ENCODE measurements at regions of chr17 and their contacts with region 1.

Region 1: GRCh38 chr17:42744806-42745617 is at the start of gene EZH1:
- DNase-seq: peak; percentile 96
- ATAC-seq: peak; percentile 91
- H3K4me3 Mint-ChIP-seq: peak within 1 kb of the TSS; percentile 89
- H3K27ac Mint-ChIP-seq: peak within 1 kb of the TSS; percentile 98
- H3K4me1 Mint-ChIP-seq: peaks cover 19% of the 10 kb centered on the region
- H3K27me3 Mint-ChIP-seq: peaks cover 7% of the 10 kb centered on the region
- total RNA-seq, gene EZH1: 28.6 to 29.5 TPM

Region 2: DNA sequence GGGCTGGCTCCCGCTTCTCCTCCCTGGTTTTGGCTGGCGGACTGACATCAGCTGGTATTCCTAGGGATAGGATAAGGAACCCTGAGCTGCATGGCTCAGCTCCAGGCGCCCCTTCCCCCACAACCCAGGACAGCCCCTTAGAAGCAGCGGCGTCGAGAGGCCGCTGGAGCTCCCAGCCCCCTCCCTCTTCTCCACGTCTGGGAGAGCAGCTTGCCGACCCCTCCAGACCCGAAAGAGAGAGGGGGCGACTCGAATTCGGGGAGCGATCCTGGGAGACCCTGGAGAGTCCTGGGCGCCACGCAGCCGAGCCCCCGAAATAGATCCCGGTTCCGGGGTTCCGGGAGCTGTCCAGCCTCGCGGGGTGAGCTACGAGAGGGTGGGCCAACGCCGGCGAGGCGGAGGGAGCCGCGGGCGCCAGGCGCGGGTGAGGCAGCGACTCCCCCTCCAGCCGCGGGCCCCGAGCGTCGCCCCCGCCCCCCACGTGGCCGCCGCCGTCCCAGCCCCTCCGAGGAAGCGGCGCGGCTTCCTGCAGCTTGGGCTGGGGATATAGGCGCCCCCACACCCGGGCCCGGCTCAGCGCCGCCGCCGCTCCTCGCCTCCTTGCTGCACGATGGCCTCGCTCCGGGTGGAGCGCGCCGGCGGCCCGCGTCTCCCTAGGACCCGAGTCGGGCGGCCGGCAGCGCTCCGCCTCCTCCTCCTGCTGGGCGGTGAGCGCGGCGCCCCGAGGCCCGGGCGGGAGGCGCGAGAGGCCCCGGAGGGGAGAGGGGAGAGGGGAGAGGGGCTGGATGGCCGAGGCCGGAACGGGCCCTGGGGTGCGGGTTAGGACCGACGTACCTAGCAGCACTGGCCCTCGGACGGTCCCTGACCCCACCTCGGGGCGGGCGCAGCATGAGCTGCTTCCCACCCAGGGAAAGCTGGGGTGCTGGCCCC is 15.9 kb after region 1 on chr17 and contains the start of gene RAMP2:
- CTCF ChIA-PET with region 1: interaction called, 12 read pairs
- POLR2A ChIA-PET with region 1: no interaction called
- intact Hi-C with region 1: loop called in 1 of 2 experiments (anchors 2 kb)
- DNase-seq: peak; percentile 44
- ATAC-seq: peak; percentile 27
- H3K4me3 Mint-ChIP-seq: no peak within 1 kb of the TSS
- H3K27ac Mint-ChIP-seq: no peak within 1 kb of the TSS
- H3K4me1 Mint-ChIP-seq: peaks cover 11% of the 10 kb centered on the region
- H3K27me3 Mint-ChIP-seq: peaks cover 48% of the 10 kb centered on the region
- total RNA-seq, gene RAMP2: not detected

Region 3: GRCh38 chr17:42773290-42774035 is 28.5 kb after region 1 on chr17 and contains the start of gene VPS25:
- CTCF ChIA-PET with region 1: interaction called, 3 read pairs
- POLR2A ChIA-PET with region 1: no interaction called
- intact Hi-C with region 1: loop called (anchors 1 to 2 kb)
- DNase-seq: peak; percentile 81
- ATAC-seq: peak; percentile 97
- H3K4me3 Mint-ChIP-seq: peak within 1 kb of the TSS; percentile 96
- H3K27ac Mint-ChIP-seq: peak within 1 kb of the TSS; percentile 95
- H3K4me1 Mint-ChIP-seq: peaks cover 22% of the 10 kb centered on the region
- H3K27me3 Mint-ChIP-seq: no peaks in the 10 kb centered on the region
- total RNA-seq, gene VPS25: 62.5 to 64.0 TPM

Region 4: GRCh38 chr17:42798383-42799380 is 53.7 kb after region 1 on chr17 and contains the starts of genes CNTD1 and COA3:
- CTCF ChIA-PET with region 1: no interaction called
- POLR2A ChIA-PET with region 1: no interaction called
- intact Hi-C with region 1: loop called (anchors 1 to 2 kb)
- DNase-seq: peak; percentile 92
- ATAC-seq: peak; percentile 100
- H3K4me3 Mint-ChIP-seq: peak within 1 kb of the TSS; percentile 87
- H3K27ac Mint-ChIP-seq: peak within 1 kb of the TSS; percentile 58
- H3K4me1 Mint-ChIP-seq: peaks cover 16% of the 10 kb centered on the region
- H3K27me3 Mint-ChIP-seq: no peaks in the 10 kb centered on the region
- total RNA-seq, gene CNTD1: not detected
- total RNA-seq, gene COA3: 30.1 to 31.4 TPM

Region 5: DNA sequence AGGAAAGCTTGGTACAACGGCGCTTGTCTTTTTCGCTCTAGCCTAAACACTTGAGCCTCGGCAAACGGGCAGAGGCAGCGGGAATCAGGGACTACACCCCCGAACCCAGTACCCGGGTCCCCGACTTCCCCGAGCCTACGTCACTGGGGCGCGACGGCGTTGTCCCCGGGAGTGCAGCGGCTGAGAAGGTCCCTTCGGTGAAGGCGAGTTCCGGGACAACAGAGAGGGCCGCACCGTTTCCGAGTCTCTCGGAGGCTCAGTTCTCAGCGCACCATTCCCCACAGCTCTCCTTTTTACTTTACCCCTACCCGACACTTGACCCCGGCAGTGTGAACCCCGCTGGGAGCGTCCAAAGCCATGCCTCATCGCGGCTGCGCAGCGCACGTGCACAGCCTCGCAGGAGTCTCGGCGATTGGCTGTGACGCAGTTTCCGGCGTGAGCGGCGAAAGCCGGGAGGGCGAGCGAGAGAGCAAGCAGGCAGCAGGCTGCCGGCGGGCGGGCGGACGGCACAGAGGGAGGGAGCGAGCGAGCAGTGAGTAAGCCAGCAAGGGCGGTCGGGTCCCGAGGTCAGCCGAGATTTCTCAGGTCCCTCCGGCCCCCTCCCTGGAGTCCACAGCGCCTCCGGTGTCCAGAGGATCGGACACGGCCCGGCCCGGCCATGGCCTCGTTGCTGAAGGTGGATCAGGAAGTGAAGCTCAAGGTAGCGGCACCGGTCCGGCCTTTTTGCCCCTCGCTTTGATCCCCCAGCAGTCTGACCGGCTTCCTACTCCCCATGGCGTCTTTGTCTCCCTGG is 88.2 kb after region 1 on chr17 and contains the start of gene PSME3:
- CTCF ChIA-PET with region 1: no interaction called
- POLR2A ChIA-PET with region 1: no interaction called
- intact Hi-C with region 1: loop called in 1 of 2 experiments (anchors 1 kb)
- DNase-seq: peak; percentile 94
- ATAC-seq: peak; percentile 90
- H3K4me3 Mint-ChIP-seq: peak within 1 kb of the TSS; percentile 96
- H3K27ac Mint-ChIP-seq: peak within 1 kb of the TSS; percentile 98
- H3K4me1 Mint-ChIP-seq: peaks cover 18% of the 10 kb centered on the region
- H3K27me3 Mint-ChIP-seq: no peaks in the 10 kb centered on the region
- total RNA-seq, gene PSME3: 116 to 118 TPM

Region 6: DNA sequence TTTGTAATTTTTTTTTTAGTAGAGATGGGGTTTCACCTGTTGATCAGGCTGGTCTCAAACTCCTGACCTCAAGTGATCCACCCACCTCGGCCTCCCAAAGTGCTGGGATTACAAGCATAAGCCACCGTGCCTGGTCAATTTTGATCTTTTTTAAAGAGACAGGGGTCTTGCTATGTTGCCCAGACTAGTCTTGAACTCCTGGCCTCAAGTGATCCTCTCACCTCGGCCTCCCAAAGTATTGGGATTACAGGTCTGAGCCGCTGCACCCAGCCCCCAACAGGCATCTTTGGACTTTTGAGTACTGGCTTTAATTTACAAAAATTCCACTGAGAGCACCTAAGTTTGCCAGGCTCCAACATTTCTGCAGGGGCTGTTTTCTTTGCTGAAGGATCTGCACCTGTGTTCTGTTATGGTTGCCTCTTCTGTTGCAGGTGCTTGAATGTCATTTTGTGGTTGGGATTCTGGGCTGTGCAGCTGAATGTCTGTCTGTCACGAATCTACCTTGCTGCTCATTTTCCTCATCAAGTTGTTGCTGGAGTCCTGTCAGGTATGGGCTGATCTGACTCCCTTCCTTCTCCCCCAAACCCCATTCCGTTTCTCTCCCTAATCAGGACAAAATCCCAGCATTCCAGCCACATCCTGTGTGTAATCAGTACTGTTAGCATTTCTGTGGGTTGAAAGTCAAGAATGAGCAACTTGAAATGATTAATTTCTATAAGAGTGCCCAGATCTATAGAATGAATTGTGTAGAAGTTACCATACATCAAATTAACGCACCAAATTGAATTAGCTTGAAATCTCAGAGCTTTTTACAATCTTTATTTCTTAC is 164.1 kb after region 1 on chr17:
- CTCF ChIA-PET with region 1: no interaction called
- POLR2A ChIA-PET with region 1: no interaction called
- intact Hi-C with region 1: no loop called
- DNase-seq: no peak
- ATAC-seq: no peak
- H3K4me3 Mint-ChIP-seq: no peak overlapping the region
- H3K27ac Mint-ChIP-seq: no peak overlapping the region
- H3K4me1 Mint-ChIP-seq: no peaks in the 10 kb centered on the region
- H3K27me3 Mint-ChIP-seq: peaks cover 10% of the 10 kb centered on the region

Region 7: DNA sequence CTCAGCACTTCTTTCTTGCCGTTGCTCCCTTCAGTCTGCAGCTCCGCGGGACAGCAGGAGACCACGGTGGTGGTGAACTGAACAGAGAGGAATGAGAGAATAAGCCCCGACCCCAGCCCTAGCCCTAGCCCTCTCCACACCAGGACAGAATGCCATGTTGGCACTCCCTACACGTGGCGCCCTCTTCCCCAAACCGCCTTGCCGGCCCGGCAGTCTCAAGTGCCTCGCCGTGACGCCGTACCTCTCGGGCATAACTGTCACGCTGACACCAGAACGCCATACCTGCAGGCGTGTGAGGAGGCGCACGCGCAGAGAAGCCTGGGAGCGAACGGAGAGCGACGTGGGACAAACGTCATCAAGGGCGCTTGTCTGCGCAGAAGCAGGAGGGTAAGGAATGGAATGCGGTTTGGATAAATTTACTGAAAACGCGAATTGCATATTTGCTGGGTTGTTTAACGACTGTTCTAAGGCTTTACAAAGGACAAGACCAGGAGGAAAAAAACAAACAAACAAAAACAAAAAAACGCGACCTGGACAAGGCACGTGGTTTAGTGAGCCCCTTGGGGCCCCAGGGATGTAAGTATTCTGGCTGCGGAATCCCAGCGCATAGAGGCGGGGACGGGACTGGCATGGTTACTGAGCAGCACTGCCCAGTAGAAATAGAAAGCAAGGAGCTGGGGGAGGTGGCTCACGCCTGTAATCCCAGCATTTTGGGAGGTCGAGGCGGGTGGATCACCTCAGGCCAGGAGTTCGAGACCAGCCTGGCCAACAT is 219.3 kb after region 1 on chr17 and contains the start of gene AARSD1:
- CTCF ChIA-PET with region 1: no interaction called
- POLR2A ChIA-PET with region 1: no interaction called
- intact Hi-C with region 1: loop called in 1 of 2 experiments (anchors 1 kb)
- DNase-seq: peak; percentile 95
- ATAC-seq: peak; percentile 95
- H3K4me3 Mint-ChIP-seq: peak within 1 kb of the TSS; percentile 93
- H3K27ac Mint-ChIP-seq: peak within 1 kb of the TSS; percentile 90
- H3K4me1 Mint-ChIP-seq: peaks cover 22% of the 10 kb centered on the region
- H3K27me3 Mint-ChIP-seq: no peaks in the 10 kb centered on the region
- total RNA-seq, gene AARSD1: 40.8 to 58.6 TPM

Region 8: GRCh38 chr17:42980398-42981397 is 235.7 kb after region 1 on chr17 and contains the start of gene RUNDC1:
- CTCF ChIA-PET with region 1: no interaction called
- POLR2A ChIA-PET with region 1: no interaction called
- intact Hi-C with region 1: loop called in 1 of 2 experiments (anchors 2 kb)
- DNase-seq: peak; percentile 95
- ATAC-seq: peak; percentile 87
- H3K4me3 Mint-ChIP-seq: peak within 1 kb of the TSS; percentile 99
- H3K27ac Mint-ChIP-seq: peak within 1 kb of the TSS; percentile 98
- H3K4me1 Mint-ChIP-seq: peaks cover 32% of the 10 kb centered on the region
- H3K27me3 Mint-ChIP-seq: no peaks in the 10 kb centered on the region
- total RNA-seq, gene RUNDC1: 12.3 to 12.5 TPM